CD4-positive, alpha-beta memory T cell (primary cell): ENCODE measurements at regions of chr12 and their contacts with region 1.

Region 1: GRCh38 chr12:69738351-69739286 is at the start of gene RAB3IP:
- DNase-seq: peak; percentile 88 to 93 (median 89)
- H3K4me3 ChIP-seq: peak within 1 kb of the TSS; percentile 50 to 80
- H3K4me3 Mint-ChIP-seq: peak within 1 kb of the TSS; percentile 85 to 93 (median 87)
- H3K27ac ChIP-seq: peak within 1 kb of the TSS; percentile 74
- H3K27ac Mint-ChIP-seq: peak within 1 kb of the TSS; percentile 80 to 88 (median 85)
- H3K4me1 ChIP-seq: peaks cover 17% of the 10 kb centered on the region
- H3K4me1 Mint-ChIP-seq: peaks cover 14 to 32% (median 21%) of the 10 kb centered on the region in 4 donors
- H3K27me3 ChIP-seq: no peaks in the 10 kb centered on the region
- H3K27me3 Mint-ChIP-seq: peaks cover 3 to 6% of the 10 kb centered on the region in 2 donors
- total RNA-seq, gene RAB3IP: 38.6 to 40.3 TPM

Region 2: DNA sequence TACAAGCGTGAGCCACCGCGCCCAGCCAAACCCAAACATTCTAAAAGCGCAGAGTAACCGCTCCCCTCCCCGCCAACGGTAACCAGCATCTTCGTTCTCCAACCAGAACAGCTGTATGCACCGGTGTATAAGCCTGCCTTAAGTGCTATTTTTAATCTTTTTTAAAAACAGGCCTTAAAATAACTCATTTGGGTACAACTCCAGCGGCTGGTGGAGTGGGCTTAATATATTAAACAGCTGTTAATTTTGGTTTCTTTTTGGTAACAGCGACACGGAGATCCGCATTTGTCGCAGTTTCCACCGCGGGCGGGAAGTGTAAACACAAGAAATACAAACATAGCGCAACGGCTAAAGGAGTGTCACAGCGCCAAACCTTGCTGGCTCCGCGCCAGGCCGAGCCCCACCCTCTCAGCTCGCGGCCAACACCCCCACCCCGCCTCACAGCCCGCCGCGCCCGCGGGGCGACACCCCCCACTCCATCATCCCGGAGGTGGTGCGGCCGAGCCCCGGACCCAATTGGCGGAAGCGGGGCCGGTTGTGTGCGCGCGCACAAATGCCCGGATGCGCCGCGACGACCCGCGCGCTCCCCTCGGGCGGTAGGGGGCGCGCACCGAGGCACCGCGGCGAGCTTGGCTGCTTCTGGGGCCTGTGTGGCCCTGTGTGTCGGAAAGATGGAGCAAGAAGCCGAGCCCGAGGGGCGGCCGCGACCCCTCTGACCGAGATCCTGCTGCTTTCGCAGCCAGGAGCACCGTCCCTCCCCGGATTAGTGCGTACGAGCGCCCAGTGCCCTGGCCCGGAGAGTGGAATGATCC is 930.8 kb before region 1 on chr12 and contains the start of gene MDM2:
- CTCF ChIA-PET with region 1: no interaction called
- POLR2A ChIA-PET with region 1: no interaction called
- intact Hi-C with region 1: loop called (anchors 2 kb)
- DNase-seq: peak; percentile 97 to 99 (median 99)
- H3K4me3 ChIP-seq: peak within 1 kb of the TSS; percentile 42 to 94
- H3K4me3 Mint-ChIP-seq: peak within 1 kb of the TSS; percentile 95 to 97 (median 96)
- H3K27ac ChIP-seq: peak within 1 kb of the TSS; percentile 92
- H3K27ac Mint-ChIP-seq: peak within 1 kb of the TSS; percentile 98 to 99 (median 99)
- H3K4me1 ChIP-seq: peaks cover 28% of the 10 kb centered on the region
- H3K4me1 Mint-ChIP-seq: peaks cover 9 to 33% (median 22%) of the 10 kb centered on the region in 4 donors
- H3K27me3 ChIP-seq: no peaks in the 10 kb centered on the region
- H3K27me3 Mint-ChIP-seq: no peaks in the 10 kb centered on the region
- total RNA-seq, gene MDM2: 117 to 121 TPM

Region 3: DNA sequence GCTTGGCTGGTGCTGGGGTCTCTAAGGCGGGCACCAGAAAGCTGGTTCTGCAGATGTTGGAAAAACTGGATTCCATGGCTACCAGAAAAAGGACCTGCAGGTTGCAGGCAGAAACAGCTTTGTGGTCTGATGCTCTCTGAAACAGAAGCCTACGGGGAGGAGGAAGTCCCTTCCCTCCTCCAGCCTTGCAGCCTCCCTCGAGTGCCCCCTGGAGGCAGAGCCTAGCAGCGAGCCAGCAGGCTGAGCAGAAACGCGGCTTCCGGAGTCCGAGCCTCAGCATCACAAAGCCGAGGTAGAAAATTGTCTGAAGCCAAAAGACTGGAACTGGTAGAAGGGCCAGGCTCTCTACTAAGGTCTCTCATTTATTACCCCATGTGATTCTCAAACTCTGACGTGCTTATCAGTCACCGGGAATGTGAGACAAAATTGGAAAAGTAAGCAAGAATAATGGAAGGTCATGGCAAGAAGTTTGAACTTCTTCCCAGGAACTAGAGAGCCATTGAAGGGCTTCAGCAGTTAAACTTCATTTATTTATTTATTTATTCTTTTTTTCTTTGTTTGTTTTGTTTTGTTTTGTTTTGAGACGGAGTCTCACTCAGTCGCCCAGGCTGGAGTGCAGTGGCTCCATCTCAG is 581.5 kb before region 1 on chr12:
- CTCF ChIA-PET with region 1: no interaction called
- POLR2A ChIA-PET with region 1: no interaction called
- intact Hi-C with region 1: loop called (anchors 1 kb)
- DNase-seq: peak; percentile 82 to 85 (median 83)
- H3K4me3 ChIP-seq: peak overlapping the region in 1 of 2 donors; percentile 6
- H3K4me3 Mint-ChIP-seq: peak overlapping the region; percentile 46 to 77 (median 70)
- H3K27ac ChIP-seq: no peak overlapping the region
- H3K27ac Mint-ChIP-seq: peak overlapping the region in 3 of 7 donors; percentile 56 to 69 (median 63)
- H3K4me1 ChIP-seq: peaks cover 20% of the 10 kb centered on the region
- H3K4me1 Mint-ChIP-seq: peaks cover 18 to 31% (median 22%) of the 10 kb centered on the region in 4 donors
- H3K27me3 ChIP-seq: no peaks in the 10 kb centered on the region
- H3K27me3 Mint-ChIP-seq: no peaks in the 10 kb centered on the region

Region 4: DNA sequence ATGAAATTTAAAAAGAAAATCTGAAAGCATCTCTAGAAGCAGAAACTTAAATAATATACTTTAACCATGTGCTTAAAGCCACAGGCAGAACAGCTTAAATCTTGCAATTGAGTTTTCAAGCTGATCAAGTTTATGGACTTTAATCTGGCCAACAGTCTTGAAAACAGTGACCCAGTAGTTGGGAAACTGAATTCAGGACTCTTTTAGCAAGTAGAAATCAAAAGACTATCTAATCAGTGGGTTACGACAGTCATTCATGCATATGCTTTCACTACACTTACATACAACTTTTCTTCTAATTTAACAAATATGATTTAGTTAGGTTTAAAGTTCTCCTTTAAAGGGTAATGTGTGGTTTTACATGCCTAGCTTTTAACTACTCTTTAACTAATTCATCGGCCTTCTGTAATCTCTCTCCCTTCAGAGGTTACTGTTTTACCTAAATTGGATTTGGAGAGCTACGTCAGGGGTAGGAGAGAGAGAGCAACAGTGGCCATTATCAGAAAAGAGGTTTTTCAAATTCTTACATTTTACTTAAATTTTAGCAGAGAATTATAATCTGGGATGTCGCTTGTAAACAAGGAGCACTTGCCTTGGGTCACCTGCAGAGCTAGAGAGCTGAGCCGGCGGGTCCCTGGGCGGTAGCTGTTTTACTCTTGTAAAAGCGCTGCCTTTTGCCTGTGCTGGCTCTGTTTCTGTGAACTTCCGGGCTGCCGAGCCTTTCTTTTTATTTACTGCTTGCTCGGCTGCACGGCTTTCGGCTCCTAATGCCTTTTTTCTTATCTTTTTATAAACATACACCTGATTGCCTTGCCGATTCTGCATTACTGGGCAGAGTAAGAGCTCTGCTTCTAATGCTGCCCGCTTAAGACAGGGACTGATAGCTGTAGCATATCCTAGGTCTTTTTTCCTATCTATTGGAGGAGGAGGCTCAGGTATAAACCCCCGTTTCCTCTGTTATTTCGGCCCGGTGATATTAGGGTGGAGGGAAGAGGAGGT is 407.8 kb before region 1 on chr12:
- CTCF ChIA-PET with region 1: no interaction called
- POLR2A ChIA-PET with region 1: interaction called, 15 read pairs
- intact Hi-C with region 1: loop called (anchors 2 kb)
- DNase-seq: peak; percentile 72 to 79 (median 74)
- H3K4me3 ChIP-seq: peak overlapping the region; percentile 49 to 95
- H3K4me3 Mint-ChIP-seq: peak overlapping the region; percentile 94 to 99 (median 96)
- H3K27ac ChIP-seq: peak overlapping the region; percentile 72
- H3K27ac Mint-ChIP-seq: peak overlapping the region; percentile 81 to 99 (median 96)
- H3K4me1 ChIP-seq: peaks cover 60% of the 10 kb centered on the region
- H3K4me1 Mint-ChIP-seq: peaks cover 36 to 64% (median 52%) of the 10 kb centered on the region in 4 donors
- H3K27me3 ChIP-seq: no peaks in the 10 kb centered on the region
- H3K27me3 Mint-ChIP-seq: no peaks in the 10 kb centered on the region

Region 5: DNA sequence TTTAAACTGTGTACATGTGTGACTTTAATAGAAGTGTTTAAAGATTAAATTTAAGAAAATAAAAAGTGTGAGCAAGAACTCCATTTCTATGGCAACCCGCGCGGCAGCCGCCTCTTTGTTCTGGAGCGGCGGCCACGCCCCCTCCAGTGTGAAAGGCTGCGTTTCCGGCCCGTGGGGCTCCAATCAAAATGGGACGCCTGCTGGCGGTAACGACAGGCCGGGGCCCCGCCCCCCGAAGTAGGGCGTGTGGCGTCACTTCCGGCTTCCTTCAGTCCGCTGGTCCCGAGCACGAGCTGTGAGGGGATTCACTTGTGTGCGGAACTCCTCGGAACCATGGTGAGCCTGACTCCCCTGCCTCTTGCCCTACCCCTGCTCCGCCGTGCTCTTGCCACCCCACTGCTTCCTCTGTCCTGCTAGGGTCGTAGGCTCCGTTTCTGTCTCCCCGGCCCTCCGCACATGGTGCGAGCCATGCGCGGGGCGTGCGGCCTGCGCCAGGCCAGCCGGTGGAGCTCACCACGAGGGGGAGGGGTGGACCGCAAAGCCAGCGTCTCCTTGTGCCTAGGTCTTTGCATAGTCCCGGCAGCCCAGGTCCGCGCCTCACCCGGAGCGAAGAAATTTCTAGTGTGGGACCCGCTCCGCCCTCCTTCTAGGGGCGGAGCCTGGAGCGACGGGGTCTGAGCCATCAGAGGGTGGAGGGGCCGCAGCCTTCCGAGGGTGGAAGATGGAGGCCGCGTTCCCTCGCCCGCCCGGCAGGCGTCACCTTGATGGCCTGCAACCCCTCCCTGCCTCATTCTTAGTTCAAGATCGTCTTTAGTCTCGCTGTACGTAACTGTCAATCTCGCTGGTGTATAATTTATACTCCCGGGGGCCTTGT is 153.2 kb before region 1 on chr12 and contains the start of gene CCT2:
- CTCF ChIA-PET with region 1: no interaction called
- POLR2A ChIA-PET with region 1: no interaction called
- intact Hi-C with region 1: loop called (anchors 2 kb)
- DNase-seq: peak; percentile 91 to 96 (median 96)
- H3K4me3 ChIP-seq: peak within 1 kb of the TSS; percentile 90 to 93
- H3K4me3 Mint-ChIP-seq: peak within 1 kb of the TSS; percentile 94 to 97 (median 95)
- H3K27ac ChIP-seq: peak within 1 kb of the TSS; percentile 95
- H3K27ac Mint-ChIP-seq: peak within 1 kb of the TSS; percentile 96 to 99 (median 98)
- H3K4me1 ChIP-seq: peaks cover 16% of the 10 kb centered on the region
- H3K4me1 Mint-ChIP-seq: peaks cover 5 to 19% (median 10%) of the 10 kb centered on the region in 4 donors
- H3K27me3 ChIP-seq: no peaks in the 10 kb centered on the region
- H3K27me3 Mint-ChIP-seq: no peaks in the 10 kb centered on the region
- total RNA-seq, gene CCT2: 92.6 to 104 TPM

Region 6: GRCh38 chr12:69698769-69699540 is 39.7 kb before region 1 on chr12 and contains the start of gene BEST3:
- CTCF ChIA-PET with region 1: no interaction called
- POLR2A ChIA-PET with region 1: no interaction called
- intact Hi-C with region 1: no loop called
- DNase-seq: no peak
- H3K4me3 ChIP-seq: no peak within 1 kb of the TSS
- H3K4me3 Mint-ChIP-seq: peak within 1 kb of the TSS in 1 of 8 donors; percentile 55
- H3K27ac ChIP-seq: no peak within 1 kb of the TSS
- H3K27ac Mint-ChIP-seq: no peak within 1 kb of the TSS
- H3K4me1 ChIP-seq: no peaks in the 10 kb centered on the region
- H3K4me1 Mint-ChIP-seq: no peaks in the 10 kb centered on the region
- H3K27me3 ChIP-seq: peaks cover 6% of the 10 kb centered on the region
- H3K27me3 Mint-ChIP-seq: peaks cover 3 to 6% of the 10 kb centered on the region in 2 donors
- total RNA-seq, gene BEST3: not detected

Region 7: GRCh38 chr12:70365648-70366518 is 627.3 kb after region 1 on chr12 and contains the start of gene KCNMB4:
- CTCF ChIA-PET with region 1: no interaction called
- POLR2A ChIA-PET with region 1: no interaction called
- intact Hi-C with region 1: loop called (anchors 2 kb)
- DNase-seq: peak; percentile 59 to 78 (median 63)
- H3K4me3 ChIP-seq: peak within 1 kb of the TSS; percentile 11 to 78
- H3K4me3 Mint-ChIP-seq: peak within 1 kb of the TSS; percentile 92 to 99 (median 94)
- H3K27ac ChIP-seq: peak within 1 kb of the TSS; percentile 3
- H3K27ac Mint-ChIP-seq: peak within 1 kb of the TSS in 6 of 7 donors; percentile 65 to 89 (median 85)
- H3K4me1 ChIP-seq: peaks cover 14% of the 10 kb centered on the region
- H3K4me1 Mint-ChIP-seq: peaks cover 8 to 22% (median 18%) of the 10 kb centered on the region in 4 donors
- H3K27me3 ChIP-seq: peaks cover 8% of the 10 kb centered on the region
- H3K27me3 Mint-ChIP-seq: peaks cover 2 to 4% of the 10 kb centered on the region in 2 donors
- total RNA-seq, gene KCNMB4: 0.67 to 1.1 TPM

Region 8: GRCh38 chr12:71663561-71664294 is 1925.1 kb after region 1 on chr12 and contains the start of gene ZFC3H1:
- CTCF ChIA-PET with region 1: no interaction called
- POLR2A ChIA-PET with region 1: no interaction called
- intact Hi-C with region 1: loop called (anchors 2 kb)
- DNase-seq: peak; percentile 95 to 98 (median 97)
- H3K4me3 ChIP-seq: peak within 1 kb of the TSS; percentile 92 to 95
- H3K4me3 Mint-ChIP-seq: peak within 1 kb of the TSS; percentile 97 to 100 (median 99)
- H3K27ac ChIP-seq: peak within 1 kb of the TSS; percentile 96
- H3K27ac Mint-ChIP-seq: peak within 1 kb of the TSS; percentile 98 to 100 (median 100)
- H3K4me1 ChIP-seq: peaks cover 41% of the 10 kb centered on the region
- H3K4me1 Mint-ChIP-seq: peaks cover 30 to 69% (median 44%) of the 10 kb centered on the region in 4 donors
- H3K27me3 ChIP-seq: no peaks in the 10 kb centered on the region
- H3K27me3 Mint-ChIP-seq: no peaks in the 10 kb centered on the region
- total RNA-seq, gene ZFC3H1: 118 to 121 TPM